Activated CD4-positive, alpha-beta memory T cell treated with anti-CD3 and anti-CD28 coated beads for 36 hours (primary cell): ENCODE measurements at regions of chr3 and their contacts with region 1.

Region 1: GRCh38 chr3:185558395-185558794 is 6.0 kb upstream of the LIPH start:
- DNase-seq: no peak
- H3K4me3 Mint-ChIP-seq: no peak overlapping the region
- H3K27ac Mint-ChIP-seq: no peak overlapping the region
- H3K4me1 Mint-ChIP-seq: peaks cover 8% of the 10 kb centered on the region
- H3K27me3 Mint-ChIP-seq: peaks cover 5% of the 10 kb centered on the region

Region 2: GRCh38 chr3:185353823-185354614 is 204.4 kb before region 1 on chr3:
- CTCF ChIA-PET with region 1: interaction called, 6 read pairs
- POLR2A ChIA-PET with region 1: no interaction called
- intact Hi-C with region 1: loop called (anchors 1 kb)
- DNase-seq: peak; percentile 80
- H3K4me3 Mint-ChIP-seq: no peak overlapping the region
- H3K27ac Mint-ChIP-seq: no peak overlapping the region
- H3K4me1 Mint-ChIP-seq: no peaks in the 10 kb centered on the region
- H3K27me3 Mint-ChIP-seq: peaks cover 6% of the 10 kb centered on the region

Region 3: GRCh38 chr3:185460719-185461350 is 97.6 kb before region 1 on chr3:
- CTCF ChIA-PET with region 1: interaction called, 13 read pairs
- POLR2A ChIA-PET with region 1: no interaction called
- intact Hi-C with region 1: no loop called
- DNase-seq: no peak
- H3K4me3 Mint-ChIP-seq: no peak overlapping the region
- H3K27ac Mint-ChIP-seq: no peak overlapping the region
- H3K4me1 Mint-ChIP-seq: no peaks in the 10 kb centered on the region
- H3K27me3 Mint-ChIP-seq: no peaks in the 10 kb centered on the region

Region 4: DNA sequence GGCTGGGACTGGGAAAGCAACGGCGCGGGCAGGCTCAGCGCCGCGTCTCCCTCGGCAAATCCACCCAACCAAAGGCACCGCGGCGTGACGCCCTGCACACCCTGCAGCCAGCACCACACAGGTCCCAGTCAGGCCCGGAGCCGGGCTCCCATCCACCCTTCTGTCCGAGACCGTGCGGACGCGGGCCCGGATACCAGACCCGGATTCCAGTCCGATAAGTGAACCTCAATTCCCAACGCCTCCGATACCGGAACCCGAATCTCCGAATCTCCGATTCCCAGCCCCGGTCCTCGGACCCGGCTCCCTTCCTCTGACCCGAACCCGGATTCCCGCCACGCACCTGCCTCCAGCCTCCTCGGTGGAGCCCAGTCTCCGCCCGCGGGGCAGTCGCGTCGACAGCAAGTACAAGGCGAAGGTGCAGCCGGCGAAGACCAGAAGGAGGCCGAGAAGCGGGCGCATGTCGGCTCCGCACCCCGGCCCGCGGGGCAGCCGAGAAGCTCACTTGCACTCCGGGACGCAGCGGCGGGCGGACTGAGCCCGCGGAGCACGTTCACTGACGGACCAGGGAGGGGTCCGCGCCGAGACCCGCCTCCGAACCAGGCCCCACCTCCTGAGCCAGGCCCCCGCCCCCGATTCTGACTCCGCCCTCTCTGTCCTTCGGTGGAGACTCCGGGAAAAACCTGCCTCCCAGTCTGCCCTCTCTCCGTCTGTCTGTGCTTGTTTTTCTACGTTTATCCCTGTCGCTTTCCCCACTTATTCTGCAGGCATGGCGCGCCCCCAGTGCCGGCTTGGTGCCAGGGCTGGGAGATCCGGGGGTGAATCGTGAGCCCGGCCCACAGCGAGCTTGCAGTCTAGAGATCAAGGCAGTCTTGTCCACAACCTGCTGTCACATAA is 59.6 kb before region 1 on chr3 and contains the start of gene TMEM41A:
- CTCF ChIA-PET with region 1: interaction called, 8 read pairs
- POLR2A ChIA-PET with region 1: interaction called, 7 read pairs
- intact Hi-C with region 1: loop called (anchors 1 kb)
- DNase-seq: peak; percentile 94
- H3K4me3 Mint-ChIP-seq: peak within 1 kb of the TSS; percentile 94
- H3K27ac Mint-ChIP-seq: peak within 1 kb of the TSS; percentile 78
- H3K4me1 Mint-ChIP-seq: peaks cover 16% of the 10 kb centered on the region
- H3K27me3 Mint-ChIP-seq: peaks cover 2% of the 10 kb centered on the region
- total RNA-seq, gene TMEM41A: 16.2 to 16.8 TPM

Region 5: DNA sequence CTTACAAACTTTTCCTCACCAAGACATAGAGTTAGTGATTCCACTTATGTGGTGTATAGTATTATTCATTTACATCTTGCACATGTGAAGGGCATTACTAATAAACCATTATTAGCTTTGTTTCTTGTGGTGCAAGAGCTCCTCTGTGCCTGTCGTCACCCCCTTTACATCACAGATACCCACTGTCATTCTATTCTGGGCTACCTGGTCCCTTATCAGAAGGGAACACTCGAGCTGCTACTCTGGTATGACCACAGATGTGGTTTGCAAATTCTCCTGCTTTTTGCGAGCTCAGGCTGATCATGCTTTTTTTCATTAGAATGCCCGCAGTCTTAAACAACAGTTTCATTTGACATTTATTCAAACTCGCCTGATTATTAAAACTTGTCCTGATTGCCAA is 13.8 kb after region 1 on chr3:
- CTCF ChIA-PET with region 1: interaction called, 33 read pairs
- POLR2A ChIA-PET with region 1: no interaction called
- intact Hi-C with region 1: no loop called
- DNase-seq: no peak
- H3K4me3 Mint-ChIP-seq: no peak overlapping the region
- H3K27ac Mint-ChIP-seq: no peak overlapping the region
- H3K4me1 Mint-ChIP-seq: peaks cover 3% of the 10 kb centered on the region
- H3K27me3 Mint-ChIP-seq: no peaks in the 10 kb centered on the region

Region 6: DNA sequence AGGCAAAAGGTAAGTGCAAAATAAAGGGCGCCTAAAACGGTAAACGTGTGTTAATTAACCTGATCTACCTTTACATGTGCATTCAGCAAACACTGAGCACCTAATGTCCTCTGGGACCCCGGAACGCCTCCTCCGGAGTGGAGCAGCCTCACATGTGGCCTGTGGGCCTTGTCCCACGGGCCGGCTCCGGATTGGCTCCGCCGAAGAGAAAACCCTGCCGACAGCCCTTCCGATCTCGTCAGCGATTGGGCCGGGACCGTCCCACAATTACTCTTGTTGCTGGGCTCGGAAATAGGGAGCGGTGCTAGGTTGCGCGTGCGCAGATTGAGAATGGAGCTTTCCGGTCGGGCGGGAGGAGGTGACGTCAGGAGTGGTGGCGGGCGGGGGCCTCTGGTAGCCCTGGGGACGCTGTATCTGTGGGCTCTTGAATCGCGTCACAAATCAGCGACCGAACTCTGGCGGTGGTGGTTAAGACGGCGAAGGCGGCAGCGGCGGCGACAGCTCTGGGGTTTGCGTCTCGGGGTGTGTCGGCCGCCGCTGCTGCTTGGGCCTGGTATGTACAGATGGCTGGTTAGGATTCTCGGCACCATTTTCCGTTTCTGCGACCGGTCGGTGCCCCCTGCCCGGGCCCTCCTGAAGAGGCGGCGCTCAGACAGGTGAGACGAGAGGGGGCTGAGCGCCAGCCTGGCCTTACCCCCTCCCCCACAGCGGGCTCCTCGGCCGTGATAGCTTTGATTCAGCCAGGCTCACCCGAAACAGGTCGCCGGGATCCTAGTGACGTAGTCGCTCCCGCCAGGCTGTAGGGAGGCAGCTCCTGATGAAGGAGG is 27.7 kb after region 1 on chr3 and contains the start of gene SENP2:
- CTCF ChIA-PET with region 1: interaction called, 19 read pairs
- POLR2A ChIA-PET with region 1: no interaction called
- intact Hi-C with region 1: no loop called
- DNase-seq: peak; percentile 100
- H3K4me3 Mint-ChIP-seq: peak within 1 kb of the TSS; percentile 88
- H3K27ac Mint-ChIP-seq: peak within 1 kb of the TSS; percentile 90
- H3K4me1 Mint-ChIP-seq: peaks cover 27% of the 10 kb centered on the region
- H3K27me3 Mint-ChIP-seq: peaks cover 3% of the 10 kb centered on the region
- total RNA-seq, gene SENP2: 29.2 to 29.6 TPM